Aorta (tissue), 5 donors: ENCODE measurements at regions of chr6 and their contacts with region 1.

Region 1: GRCh38 chr6:8180327-8181159 is 78.2 kb upstream of the EEF1E1 start:
- DNase-seq: no peak
- ATAC-seq: peak; percentile 34
- H3K4me3 ChIP-seq: no peak overlapping the region
- H3K27ac ChIP-seq: peak overlapping the region; percentile 64 to 81
- H3K4me1 ChIP-seq: peaks cover 2 to 14% of the 10 kb centered on the region in 2 donors
- H3K27me3 ChIP-seq: no peaks in the 10 kb centered on the region

Region 2: GRCh38 chr6:8085053-8085511 is 95.5 kb before region 1 on chr6:
- intact Hi-C with region 1: loop called in 1 of 2 experiments (anchors 5 kb)
- DNase-seq: peak in 1 of 2 donors; percentile 71
- ATAC-seq: peak; percentile 64
- H3K4me3 ChIP-seq: no peak overlapping the region
- H3K27ac ChIP-seq: peak overlapping the region in 1 of 2 donors; percentile 89
- H3K4me1 ChIP-seq: peaks cover 2 to 10% of the 10 kb centered on the region in 2 donors
- H3K27me3 ChIP-seq: no peaks in the 10 kb centered on the region

Region 3: DNA sequence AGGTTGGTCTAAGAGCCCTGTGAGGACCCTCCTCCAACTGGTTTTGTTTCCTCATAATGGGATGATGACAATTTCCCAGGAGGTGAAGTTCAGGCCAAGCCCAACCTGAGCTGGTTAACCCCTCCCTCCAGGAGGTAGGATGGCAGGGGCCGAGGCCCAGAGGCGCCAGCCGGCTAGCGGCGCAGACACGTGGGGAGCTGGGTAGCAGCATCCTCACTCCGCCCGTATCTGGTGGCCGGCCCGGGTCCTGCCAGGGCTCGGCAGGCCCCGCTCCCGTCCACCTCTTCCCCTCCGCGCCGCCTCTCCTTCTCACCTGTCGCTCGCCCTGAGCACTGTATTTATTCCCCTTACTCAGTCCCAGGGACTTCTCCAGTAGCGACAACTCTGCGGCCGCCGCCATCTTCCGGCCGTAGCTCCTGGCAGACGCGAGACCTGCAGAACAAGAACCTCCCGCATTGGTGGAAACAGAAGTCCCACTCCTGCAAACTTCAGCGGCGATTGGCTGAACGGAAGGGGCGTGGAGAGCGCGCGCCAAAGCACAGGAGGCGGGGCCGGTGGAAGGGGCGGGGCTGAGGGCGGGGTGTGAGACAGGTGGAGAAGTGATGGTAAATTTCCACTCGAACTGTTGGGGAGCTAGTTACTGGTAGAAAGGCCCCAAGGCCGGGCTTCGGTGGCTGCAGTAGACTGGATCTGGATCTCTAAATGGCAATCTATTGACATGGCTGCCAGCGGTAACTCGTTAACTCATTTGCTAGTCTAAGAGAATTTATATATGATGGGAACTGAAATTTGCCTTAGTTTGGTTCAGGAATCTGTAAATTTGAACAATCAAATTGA is 78.2 kb before region 1 on chr6 and contains the start of gene EEF1E1:
- intact Hi-C with region 1: no loop called
- DNase-seq: peak; percentile 95 to 98
- ATAC-seq: peak; percentile 98
- H3K4me3 ChIP-seq: peak within 1 kb of the TSS; percentile 51 to 83
- H3K27ac ChIP-seq: peak within 1 kb of the TSS in 1 of 2 donors; percentile 31
- H3K4me1 ChIP-seq: peaks cover 0 to 2% of the 10 kb centered on the region in 2 donors
- H3K27me3 ChIP-seq: no peaks in the 10 kb centered on the region
- total RNA-seq, gene EEF1E1: 17.1 to 17.9 TPM

Region 4: GRCh38 chr6:8157839-8158238 is 22.7 kb before region 1 on chr6:
- intact Hi-C with region 1: no loop called
- DNase-seq: no peak
- ATAC-seq: no peak
- H3K4me3 ChIP-seq: no peak overlapping the region
- H3K27ac ChIP-seq: no peak overlapping the region
- H3K4me1 ChIP-seq: no peaks in the 10 kb centered on the region
- H3K27me3 ChIP-seq: no peaks in the 10 kb centered on the region